RWPE1 (cell line): ENCODE measurements at regions of chr1 and their contacts with region 1.

Region 1: GRCh38 chr1:26848947-26849774 is 13.8 kb upstream of the SFN start:
- DNase-seq: peak; percentile 97
- H3K27ac ChIP-seq: peak overlapping the region; percentile 100
- CTCF ChIP-seq: no peak

Region 2: GRCh38 chr1:26838474-26839338 is 10.5 kb before region 1 on chr1:
- CTCF ChIA-PET with region 1: no interaction called
- POLR2A ChIA-PET with region 1: no interaction called
- DNase-seq: no peak
- H3K27ac ChIP-seq: peak overlapping the region; percentile 51
- CTCF ChIP-seq: no peak

Region 3: DNA sequence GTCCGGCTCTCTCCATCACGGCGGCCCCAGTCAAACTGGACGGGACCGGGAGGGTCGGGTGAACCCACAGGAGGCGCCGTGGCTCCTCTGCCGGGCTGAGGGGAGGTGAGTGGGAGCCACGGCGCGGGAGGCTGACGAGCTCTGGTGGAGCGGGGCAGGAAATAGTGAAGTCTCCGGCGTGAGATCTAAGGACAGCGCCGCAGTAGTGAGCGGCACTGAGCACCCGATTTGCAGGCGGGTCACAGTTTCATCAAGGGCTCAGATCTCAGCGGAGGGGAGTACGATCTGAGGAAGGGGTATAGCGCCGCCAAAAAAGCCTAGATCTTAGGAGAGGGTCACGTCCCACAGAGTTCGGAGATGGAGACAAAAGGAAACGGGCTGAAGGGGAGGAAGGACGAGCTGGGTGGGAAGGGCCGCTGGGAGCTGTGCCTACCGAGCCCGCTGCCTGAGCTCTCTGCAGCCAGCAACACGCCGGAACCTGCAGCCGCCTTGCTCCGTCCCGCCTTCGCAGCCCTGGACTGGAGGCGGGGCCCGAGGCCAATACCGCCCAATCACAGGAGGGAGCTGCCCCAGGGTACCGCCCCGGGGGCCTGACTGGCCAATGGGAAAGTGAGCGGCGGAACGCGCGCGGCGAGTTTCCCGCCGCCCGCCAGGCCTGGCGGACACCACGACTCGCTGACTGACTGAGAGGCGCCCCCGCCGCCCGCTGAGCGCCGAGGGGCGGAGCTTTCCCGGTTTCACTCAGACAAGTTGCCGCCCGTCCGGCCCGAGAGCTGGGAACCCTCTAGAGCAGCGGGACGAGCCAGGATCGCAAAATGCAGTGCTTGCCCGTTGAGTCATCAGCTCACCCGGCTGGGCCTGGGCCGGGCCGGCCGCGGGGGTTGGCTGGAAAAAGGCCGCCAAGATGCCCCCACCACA is 15.7 kb after region 1 on chr1:
- CTCF ChIA-PET with region 1: interaction called, 3 read pairs
- POLR2A ChIA-PET with region 1: interaction called, 13 read pairs
- DNase-seq: peak; percentile 93
- H3K27ac ChIP-seq: peak overlapping the region; percentile 100
- CTCF ChIP-seq: no peak